Head of caudate nucleus (tissue), 42 donors: ENCODE measurements at regions of chr7 and their contacts with region 1.

Region 1: GRCh38 chr7:148264933-148265557 is 325.5 kb upstream of the C7orf33 start:
- DNase-seq: peak in 13 of 42 donors; percentile 19 to 64 (median 34)

Region 2: DNA sequence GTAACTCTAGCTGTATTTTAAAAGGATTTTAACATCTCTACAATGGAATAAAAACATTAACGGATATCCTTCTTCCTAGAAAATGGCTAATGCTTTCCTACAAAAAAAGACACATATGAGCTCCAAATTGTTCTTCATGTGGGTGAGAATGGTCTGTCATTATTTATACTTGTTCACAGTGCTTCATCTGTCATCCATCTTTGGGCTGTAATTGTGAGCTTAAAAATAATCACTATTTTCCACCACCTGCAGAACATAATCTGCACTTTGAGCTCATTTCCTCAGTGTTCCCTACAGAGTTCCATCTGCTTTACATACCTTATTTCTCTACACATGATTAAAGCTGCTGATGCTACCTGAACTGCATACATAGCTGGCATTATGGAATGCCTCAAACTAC is 653.6 kb before region 1 on chr7:
- intact Hi-C with region 1: no loop called
- DNase-seq: no peak

Region 3: DNA sequence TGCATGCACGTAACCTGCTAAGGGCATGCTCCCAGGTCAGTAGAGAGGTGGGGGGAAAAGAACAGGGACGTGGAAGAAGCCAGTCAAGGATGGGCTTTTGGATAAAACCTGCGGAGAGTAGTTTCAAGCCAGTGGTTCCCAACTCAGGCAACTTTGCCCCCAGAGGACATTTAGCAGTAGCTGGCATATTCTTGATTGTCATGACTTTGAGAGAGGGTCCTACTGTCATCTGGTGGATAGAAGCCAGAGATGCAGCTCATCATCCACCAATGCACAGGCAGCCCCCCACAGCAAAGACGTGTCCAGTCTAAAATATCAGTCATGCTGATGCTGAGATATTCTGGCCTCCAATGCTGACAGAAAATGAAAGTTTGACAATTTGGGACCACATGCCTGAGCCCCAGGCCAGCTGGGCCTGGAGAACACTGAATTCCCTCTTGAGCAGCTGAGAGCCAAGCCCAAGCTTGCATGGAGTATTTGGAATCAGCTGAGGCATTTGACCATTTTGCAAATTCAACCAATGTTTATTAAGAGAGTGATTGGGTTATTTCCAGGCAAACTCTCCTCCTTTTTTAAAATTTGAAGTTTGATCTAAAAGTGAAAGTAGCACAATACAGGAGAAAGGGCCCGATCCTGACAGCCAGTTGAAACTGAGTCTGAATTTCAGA is 215.6 kb after region 1 on chr7:
- intact Hi-C with region 1: loop called (anchors 5 kb)
- DNase-seq: peak in 1 of 42 donors; percentile 17